AG04450 (cell line): ENCODE measurements at regions of chr5 and their contacts with region 1.

Region 1: DNA sequence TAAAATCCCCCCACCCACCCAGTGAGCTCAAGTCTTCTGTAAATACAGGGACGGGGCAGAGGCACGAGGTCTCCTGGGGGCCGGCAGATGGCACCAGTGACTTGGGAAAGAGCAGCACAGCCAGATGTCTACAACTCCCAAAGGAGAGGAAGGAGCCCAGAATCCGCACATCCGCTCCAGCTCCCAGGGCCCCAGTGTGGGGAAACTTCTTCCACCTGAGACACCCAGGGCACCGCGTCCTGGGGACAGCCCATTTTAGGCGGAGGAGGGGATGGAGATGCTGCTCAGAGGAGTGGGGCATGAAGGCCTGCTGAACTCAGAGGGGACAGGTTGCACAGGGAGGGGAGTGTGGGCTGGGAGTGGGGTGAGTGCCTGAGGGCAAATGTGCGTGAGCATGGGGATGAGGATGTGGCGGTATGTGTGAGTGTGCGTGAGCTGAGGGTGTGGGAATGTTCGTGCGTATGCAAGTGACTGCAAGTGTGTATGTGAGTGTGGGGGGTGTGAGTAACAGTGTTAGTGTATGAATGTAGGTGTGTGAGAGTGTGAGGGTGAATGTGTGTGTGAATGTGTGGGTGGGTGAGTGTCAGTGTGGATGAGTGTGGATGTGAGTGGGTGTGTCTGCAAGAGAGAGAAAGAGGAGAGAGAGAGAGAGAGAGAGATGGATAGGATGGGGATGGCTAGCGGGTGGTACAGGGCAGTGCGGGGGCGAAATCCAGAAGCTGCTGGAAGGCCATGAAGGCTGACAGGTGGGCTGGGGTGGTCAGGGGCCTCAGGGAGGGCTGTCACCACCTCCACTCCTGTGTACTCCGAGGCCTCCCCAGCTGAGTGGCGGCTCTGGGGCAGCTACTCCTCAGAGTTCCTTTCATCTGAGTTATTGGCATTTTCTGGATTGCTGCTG is 63.5 kb downstream of the DUSP1 start:
- DNase-seq: peak; percentile 55
- H3K4me3 ChIP-seq: 0 out of 2 replicates have a peak overlapping the region, but pooled peaks have one; percentile 10
- H3K27ac ChIP-seq: no peak overlapping the region
- H3K27me3 ChIP-seq: peaks cover 12% of the 10 kb centered on the region
- CTCF ChIP-seq: peak; percentile 74

Region 2: DNA sequence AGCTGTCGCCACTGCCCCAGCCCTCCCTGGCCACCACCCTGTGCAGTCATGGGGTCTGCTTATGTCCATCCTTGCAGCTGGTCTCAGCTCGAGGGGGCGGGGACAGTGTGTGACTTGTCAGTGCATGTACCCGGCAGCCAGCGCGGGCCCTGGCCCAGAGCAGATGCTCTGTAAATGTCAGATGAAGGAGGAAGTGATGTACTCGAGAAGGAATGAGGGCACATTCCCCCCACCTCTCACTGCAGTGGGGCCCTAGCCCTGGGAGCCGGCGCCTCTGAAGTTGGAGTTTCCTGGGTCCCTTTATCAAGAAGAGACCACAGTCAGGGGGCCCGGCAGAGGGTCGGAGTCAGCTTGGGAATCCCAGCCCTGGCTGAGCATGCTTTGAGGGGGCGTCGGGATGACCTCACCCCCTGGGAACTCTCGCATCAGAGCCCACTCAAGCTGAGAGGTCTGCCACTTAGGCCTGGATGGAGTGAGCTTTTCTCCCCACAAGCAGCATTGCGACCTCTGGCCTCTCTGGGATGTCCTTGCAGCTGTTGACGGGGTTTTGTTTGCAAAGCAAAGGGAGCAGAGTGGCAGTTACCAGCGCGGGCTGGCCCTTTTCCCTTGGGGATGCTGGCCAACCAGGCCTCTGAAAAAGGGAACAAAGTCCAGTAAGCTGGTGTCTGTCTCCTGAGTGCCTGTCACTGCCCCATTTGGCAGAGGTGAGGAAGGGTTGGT is 47.5 kb before region 1 on chr5:
- CTCF ChIA-PET with region 1: no interaction called
- POLR2A ChIA-PET with region 1: no interaction called
- DNase-seq: peak; percentile 72
- H3K4me3 ChIP-seq: peak overlapping the region; percentile 7; the same call in 1 of the 2 replicates
- H3K27ac ChIP-seq: peak overlapping the region; percentile 97
- H3K27me3 ChIP-seq: no peaks in the 10 kb centered on the region
- CTCF ChIP-seq: no peak

Region 3: DNA sequence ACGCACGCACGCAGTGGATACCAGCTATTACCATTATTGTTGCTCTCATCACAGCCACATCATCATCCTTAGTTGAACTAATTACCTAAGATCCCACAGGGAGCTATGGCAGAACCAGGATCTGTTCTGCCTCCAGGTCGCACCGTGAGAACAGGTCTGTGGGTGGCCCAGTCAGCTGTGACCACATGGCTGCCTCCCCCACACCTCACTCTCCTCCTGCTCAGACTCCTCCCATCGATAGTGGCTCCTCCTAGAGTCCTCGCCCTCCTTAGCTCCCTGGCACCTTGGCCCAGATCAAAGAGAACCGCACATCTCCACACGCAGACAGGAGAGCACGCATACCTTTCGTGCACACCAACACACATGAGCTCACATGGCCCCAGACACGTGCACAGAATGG is 219.3 kb after region 1 on chr5:
- CTCF ChIA-PET with region 1: interaction called, 157 read pairs
- POLR2A ChIA-PET with region 1: no interaction called
- DNase-seq: no peak
- H3K4me3 ChIP-seq: no peak overlapping the region
- H3K27ac ChIP-seq: no peak overlapping the region
- H3K27me3 ChIP-seq: no peaks in the 10 kb centered on the region
- CTCF ChIP-seq: no peak

Region 4: DNA sequence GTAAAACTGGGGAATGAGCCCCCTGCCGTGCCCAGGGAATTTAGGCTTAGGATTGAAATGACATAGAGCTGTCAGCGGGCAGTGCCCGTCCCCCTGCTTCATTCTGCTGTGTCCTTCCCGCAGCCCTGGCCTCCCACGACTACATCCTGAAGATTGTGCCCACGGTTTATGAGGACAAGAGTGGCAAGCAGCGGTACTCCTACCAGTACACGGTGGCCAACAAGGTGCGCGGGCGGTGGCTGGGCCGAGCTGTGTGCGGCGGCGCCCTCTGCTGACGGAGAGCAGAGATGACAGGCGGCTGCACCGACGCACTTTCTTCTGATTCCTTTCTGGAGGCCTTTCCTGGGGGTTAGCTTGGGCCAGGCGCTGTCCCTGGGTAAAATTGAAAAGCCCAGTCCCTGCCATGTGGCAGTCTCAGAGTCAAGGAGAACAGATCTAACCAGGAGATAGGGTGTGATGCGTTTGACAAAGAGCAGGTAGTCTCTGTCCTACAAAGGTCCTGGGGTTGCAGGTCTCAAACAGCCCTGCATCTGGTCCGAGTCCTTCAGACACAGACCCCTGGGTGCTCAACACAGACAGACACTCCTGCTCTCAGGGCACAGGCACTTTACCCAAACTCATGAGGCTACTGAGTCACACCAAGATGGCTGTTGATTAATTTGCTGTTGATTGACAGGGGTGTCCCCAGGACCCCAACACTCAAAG is 224.9 kb after region 1 on chr5:
- CTCF ChIA-PET with region 1: interaction called, 157 read pairs
- POLR2A ChIA-PET with region 1: no interaction called
- DNase-seq: no peak
- H3K4me3 ChIP-seq: no peak overlapping the region
- H3K27ac ChIP-seq: peak overlapping the region; percentile 89
- H3K27me3 ChIP-seq: no peaks in the 10 kb centered on the region
- CTCF ChIP-seq: peak; percentile 96

Region 5: GRCh38 chr5:172939071-172939470 is 231.5 kb after region 1 on chr5:
- CTCF ChIA-PET with region 1: interaction called, 157 read pairs
- POLR2A ChIA-PET with region 1: interaction called, 3 read pairs
- DNase-seq: no peak
- H3K4me3 ChIP-seq: no peak overlapping the region
- H3K27ac ChIP-seq: no peak overlapping the region
- H3K27me3 ChIP-seq: no peaks in the 10 kb centered on the region
- CTCF ChIP-seq: peak; percentile 47

Region 6: GRCh38 chr5:172973127-172973916 is 265.8 kb after region 1 on chr5:
- CTCF ChIA-PET with region 1: interaction called, 18 read pairs
- POLR2A ChIA-PET with region 1: no interaction called
- DNase-seq: no peak
- H3K4me3 ChIP-seq: no peak overlapping the region
- H3K27ac ChIP-seq: peak overlapping the region; percentile 39
- H3K27me3 ChIP-seq: no peaks in the 10 kb centered on the region
- CTCF ChIP-seq: no peak

Region 7: GRCh38 chr5:173281910-173282309 is 574.4 kb after region 1 on chr5:
- CTCF ChIA-PET with region 1: interaction called, 14 read pairs
- POLR2A ChIA-PET with region 1: no interaction called
- DNase-seq: no peak
- H3K4me3 ChIP-seq: no peak overlapping the region
- H3K27ac ChIP-seq: no peak overlapping the region
- H3K27me3 ChIP-seq: peaks cover 49% of the 10 kb centered on the region
- CTCF ChIP-seq: peak; percentile 55